Breast epithelium (tissue), 4 donors: ENCODE measurements at regions of chr6 and their contacts with region 1.

Region 1: DNA sequence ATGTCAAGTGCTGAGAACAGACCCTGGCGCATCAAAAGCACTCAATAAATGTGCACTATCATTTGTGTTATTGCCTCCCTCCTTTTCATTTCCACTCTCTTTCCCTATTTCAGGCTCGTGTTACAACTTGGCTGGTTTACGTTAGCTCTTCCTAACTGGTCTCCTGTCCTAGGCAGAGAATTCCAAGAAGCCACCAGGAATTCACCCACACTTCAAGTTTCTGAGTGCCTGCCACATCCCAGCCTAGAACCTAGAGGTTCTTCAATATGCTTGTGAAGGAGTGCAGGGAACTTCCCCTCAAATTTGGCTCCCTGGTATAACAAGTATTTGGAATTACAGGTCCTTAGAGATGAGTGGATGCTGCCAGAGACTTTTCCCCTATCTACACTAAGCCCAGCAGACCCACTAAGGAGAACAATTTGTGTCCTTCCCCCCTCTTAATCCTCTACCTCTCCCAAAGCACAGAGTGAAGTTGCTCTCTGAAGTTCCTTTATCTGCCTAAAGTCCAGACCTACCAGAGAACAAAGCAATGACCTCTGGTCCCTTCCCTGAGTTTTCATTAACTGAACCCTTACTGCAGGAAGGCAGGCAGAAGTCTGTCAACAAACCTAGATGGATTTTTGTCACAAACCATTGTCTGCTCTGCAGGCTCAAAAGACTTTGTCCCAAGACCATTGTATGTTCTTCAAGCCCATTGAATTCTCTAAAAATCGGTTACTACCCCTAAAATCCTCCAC is 201.6 kb upstream of the JARID2 start:
- DNase-seq: no peak
- H3K4me3 ChIP-seq: no peak overlapping the region
- H3K27ac ChIP-seq: no peak overlapping the region
- H3K4me1 ChIP-seq: no peaks in the 10 kb centered on the region
- H3K27me3 ChIP-seq: no peaks in the 10 kb centered on the region
- CTCF ChIP-seq: no peak
- POLR2A ChIP-seq: no peak

Region 2: GRCh38 chr6:15081447-15081846 is 37.1 kb after region 1 on chr6:
- intact Hi-C with region 1: loop called (anchors 1 kb)
- DNase-seq: no peak
- H3K4me3 ChIP-seq: no peak overlapping the region
- H3K27ac ChIP-seq: no peak overlapping the region
- H3K4me1 ChIP-seq: no peaks in the 10 kb centered on the region
- H3K27me3 ChIP-seq: no peaks in the 10 kb centered on the region
- CTCF ChIP-seq: no peak
- POLR2A ChIP-seq: no peak

Region 3: DNA sequence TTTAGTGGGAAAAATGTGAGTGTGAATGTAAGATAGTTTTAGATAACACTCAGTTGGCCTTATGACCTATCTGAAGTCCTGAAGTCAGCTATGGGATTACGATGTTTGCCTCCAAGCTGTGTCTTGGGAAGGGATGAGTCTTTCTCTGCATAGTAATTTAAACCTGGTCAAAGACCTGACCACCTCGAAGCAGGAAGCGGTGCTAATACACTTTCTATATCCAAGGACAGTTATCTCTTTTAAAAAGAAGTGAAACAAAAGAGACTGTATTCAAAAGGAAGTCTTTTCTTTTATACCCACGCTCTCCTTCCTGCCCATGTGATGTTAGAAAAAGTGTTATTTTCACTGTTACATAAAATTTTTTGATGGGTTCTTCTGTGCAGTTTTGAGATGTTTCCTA is 296.5 kb after region 1 on chr6:
- intact Hi-C with region 1: loop called (anchors 5 kb)
- DNase-seq: no peak
- H3K4me3 ChIP-seq: no peak overlapping the region
- H3K27ac ChIP-seq: no peak overlapping the region
- H3K4me1 ChIP-seq: no peaks in the 10 kb centered on the region
- H3K27me3 ChIP-seq: no peaks in the 10 kb centered on the region
- CTCF ChIP-seq: no peak
- POLR2A ChIP-seq: no peak